Activated CD4-positive, alpha-beta T cell treated with anti-CD3 and anti-CD28 coated beads for 36 hours (primary cell): ENCODE measurements at regions of chr6 and their contacts with region 1.

Region 1: DNA sequence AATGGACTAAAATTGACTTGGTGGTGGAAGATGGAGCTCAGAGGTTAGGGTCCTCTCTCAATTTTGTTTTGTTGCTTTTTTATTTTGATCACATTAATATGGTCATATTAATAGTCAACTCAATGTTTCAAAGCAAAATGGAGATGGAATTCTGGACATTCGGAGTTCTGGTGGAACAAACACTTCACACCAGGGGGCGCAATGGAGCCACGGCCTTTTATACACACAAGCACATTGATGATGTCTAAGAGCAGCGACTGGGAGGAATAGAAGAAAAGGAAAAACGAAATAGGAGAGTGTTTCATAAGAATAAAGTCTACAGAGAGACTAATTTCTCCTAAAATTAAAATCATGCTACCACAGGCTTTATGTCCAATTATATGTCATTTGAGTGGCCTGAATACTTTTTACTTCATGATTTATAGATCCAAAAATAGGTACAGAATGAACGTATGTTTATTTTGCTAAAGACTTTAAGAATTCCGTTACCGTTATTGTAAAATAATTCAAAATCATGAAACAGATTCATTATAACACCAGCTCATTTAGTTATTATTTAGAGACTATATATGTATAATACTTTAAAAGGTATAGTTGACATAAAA is 197.6 kb upstream of the SASH1 start:
- DNase-seq: peak; percentile 85
- ATAC-seq: no peak
- H3K4me3 Mint-ChIP-seq: no peak overlapping the region
- H3K27ac Mint-ChIP-seq: no peak overlapping the region
- H3K4me1 Mint-ChIP-seq: peaks cover 19% of the 10 kb centered on the region
- H3K27me3 Mint-ChIP-seq: peaks cover 9% of the 10 kb centered on the region

Region 2: DNA sequence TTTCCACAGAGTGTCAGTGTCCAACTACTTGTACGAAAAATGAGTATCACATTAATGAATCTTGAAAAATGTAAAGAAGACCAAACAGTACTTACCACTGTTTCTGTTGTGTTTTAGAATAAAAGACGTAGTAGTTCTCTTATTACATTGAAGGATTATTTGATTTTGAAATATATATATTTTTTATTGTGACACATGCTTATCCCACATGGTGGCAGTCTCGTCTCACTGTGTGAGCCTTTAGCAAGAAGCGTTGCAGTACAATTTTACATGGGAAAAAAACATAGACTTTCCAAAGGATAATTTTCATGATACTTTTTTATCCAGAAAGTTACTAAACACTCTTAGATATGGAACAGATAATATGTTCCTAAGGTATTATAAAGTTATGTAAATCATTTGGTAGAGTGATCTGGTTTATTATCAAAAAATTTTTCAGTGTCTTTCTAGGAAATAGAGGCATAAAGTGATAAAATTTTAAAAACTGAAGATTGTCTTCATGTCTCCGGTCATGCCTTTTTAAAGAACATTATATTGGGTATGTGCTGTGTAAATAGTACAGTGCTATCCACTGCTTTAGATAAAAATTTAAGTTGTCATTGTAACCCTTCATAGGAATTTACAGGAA is 754.0 kb before region 1 on chr6:
- CTCF ChIA-PET with region 1: interaction called, 5 read pairs
- POLR2A ChIA-PET with region 1: no interaction called
- intact Hi-C with region 1: loop called in 1 of 2 experiments (anchors 10 kb)
- DNase-seq: no peak
- ATAC-seq: no peak
- H3K4me3 Mint-ChIP-seq: no peak overlapping the region
- H3K27ac Mint-ChIP-seq: no peak overlapping the region
- H3K4me1 Mint-ChIP-seq: no peaks in the 10 kb centered on the region
- H3K27me3 Mint-ChIP-seq: no peaks in the 10 kb centered on the region

Region 3: GRCh38 chr6:148166339-148166968 is 21.4 kb after region 1 on chr6:
- CTCF ChIA-PET with region 1: interaction called, 49 read pairs
- POLR2A ChIA-PET with region 1: no interaction called
- intact Hi-C with region 1: loop called (anchors 1 kb)
- DNase-seq: no peak
- ATAC-seq: peak; percentile 33
- H3K4me3 Mint-ChIP-seq: no peak overlapping the region
- H3K27ac Mint-ChIP-seq: no peak overlapping the region
- H3K4me1 Mint-ChIP-seq: peaks cover 2% of the 10 kb centered on the region
- H3K27me3 Mint-ChIP-seq: peaks cover 5% of the 10 kb centered on the region

Region 4: DNA sequence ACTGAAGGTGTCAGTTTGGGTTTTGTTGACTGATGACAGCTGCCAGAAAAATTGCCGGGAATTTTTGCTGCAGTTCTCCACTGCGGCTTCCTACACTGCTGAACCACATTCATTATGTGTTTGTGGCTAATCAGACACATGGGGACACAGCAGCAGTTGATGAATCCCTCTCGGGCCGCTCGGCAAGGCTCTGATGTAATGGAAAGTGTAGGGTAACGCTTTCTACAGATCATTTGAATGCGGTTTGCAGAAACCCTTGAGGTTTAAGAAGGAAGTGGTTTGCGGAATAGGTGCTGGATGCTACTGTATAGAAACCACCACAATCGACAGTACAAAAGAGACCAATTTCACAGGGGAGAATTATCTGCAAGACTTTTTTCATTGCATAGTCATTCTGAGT is 59.0 kb after region 1 on chr6:
- CTCF ChIA-PET with region 1: no interaction called
- POLR2A ChIA-PET with region 1: no interaction called
- intact Hi-C with region 1: loop called (anchors 1 to 2 kb)
- DNase-seq: peak; percentile 85
- ATAC-seq: peak; percentile 88
- H3K4me3 Mint-ChIP-seq: peak overlapping the region; percentile 66
- H3K27ac Mint-ChIP-seq: peak overlapping the region; percentile 59
- H3K4me1 Mint-ChIP-seq: peaks cover 38% of the 10 kb centered on the region
- H3K27me3 Mint-ChIP-seq: peaks cover 75% of the 10 kb centered on the region

Region 5: DNA sequence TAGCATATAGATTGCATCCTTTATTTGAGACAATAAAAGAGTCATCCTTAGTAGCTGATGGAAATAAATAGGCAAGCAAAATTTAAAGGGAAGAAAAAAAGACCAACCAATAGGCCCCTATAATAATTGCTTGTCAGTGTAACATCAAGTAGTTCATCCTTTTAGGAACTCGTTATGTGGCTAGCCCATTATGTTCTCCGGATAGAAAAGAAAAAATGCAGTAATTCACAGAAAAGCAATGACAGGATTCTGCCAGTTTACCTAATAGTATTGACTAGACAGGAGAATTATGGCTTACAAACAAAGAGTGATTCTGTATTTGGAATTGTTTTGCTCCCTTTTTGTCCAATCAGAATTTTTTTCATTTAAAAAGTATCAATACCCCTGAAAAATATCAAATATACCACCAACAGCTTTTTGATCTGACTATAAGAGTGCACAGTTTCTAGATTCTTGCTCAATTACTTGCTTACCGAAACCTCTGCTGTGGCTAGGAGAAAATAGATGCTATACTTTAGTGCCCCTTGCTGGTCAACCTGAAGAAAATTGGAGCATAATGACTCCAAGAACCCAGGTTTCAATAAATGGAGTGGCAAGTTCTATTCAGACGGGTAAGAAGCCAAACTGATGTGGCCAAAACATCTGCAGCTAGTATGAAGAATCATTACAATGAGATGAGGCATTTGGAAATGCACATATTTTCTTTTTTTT is 106.1 kb after region 1 on chr6:
- CTCF ChIA-PET with region 1: interaction called, 3 read pairs
- POLR2A ChIA-PET with region 1: no interaction called
- intact Hi-C with region 1: loop called in 1 of 2 experiments (anchors 1 kb)
- DNase-seq: no peak
- ATAC-seq: no peak
- H3K4me3 Mint-ChIP-seq: no peak overlapping the region
- H3K27ac Mint-ChIP-seq: no peak overlapping the region
- H3K4me1 Mint-ChIP-seq: no peaks in the 10 kb centered on the region
- H3K27me3 Mint-ChIP-seq: peaks cover 9% of the 10 kb centered on the region

Region 6: DNA sequence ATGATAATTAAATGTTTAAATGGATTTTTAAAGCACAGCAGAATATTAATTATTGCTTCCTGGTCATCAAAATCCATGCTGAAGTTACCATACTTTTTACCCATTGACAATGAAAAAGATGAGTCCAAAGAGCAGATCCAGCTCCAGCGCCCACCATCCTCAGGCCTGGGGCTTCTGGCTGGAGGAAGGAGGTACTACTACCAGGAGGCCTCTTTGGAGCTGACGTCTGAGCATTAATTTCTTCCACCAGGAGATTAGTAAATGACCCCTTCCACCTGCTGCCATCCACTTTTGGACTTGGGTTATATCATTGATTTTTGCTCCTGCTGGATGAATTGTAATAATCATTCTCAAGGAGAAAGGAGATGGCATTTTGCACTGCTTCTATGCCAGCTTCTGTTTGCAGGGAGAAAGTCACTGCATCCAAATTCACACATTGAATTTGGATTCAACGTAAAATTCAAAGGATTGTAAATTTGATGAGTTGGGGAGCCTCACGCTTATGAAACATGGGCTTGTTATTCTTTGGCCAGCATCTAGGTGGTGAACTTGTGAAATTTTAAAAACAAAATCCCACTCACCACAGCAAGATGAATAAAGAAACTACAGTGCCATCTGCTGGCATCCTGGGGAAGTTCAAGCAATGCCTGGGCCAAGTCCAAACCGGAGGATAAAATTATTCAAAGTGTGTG is 319.4 kb after region 1 on chr6:
- CTCF ChIA-PET with region 1: interaction called, 6 read pairs
- POLR2A ChIA-PET with region 1: no interaction called
- intact Hi-C with region 1: loop called (anchors 1 to 10 kb)
- DNase-seq: peak; percentile 75
- ATAC-seq: peak; percentile 60
- H3K4me3 Mint-ChIP-seq: no peak overlapping the region
- H3K27ac Mint-ChIP-seq: no peak overlapping the region
- H3K4me1 Mint-ChIP-seq: peaks cover 3% of the 10 kb centered on the region
- H3K27me3 Mint-ChIP-seq: peaks cover 12% of the 10 kb centered on the region

Region 7: DNA sequence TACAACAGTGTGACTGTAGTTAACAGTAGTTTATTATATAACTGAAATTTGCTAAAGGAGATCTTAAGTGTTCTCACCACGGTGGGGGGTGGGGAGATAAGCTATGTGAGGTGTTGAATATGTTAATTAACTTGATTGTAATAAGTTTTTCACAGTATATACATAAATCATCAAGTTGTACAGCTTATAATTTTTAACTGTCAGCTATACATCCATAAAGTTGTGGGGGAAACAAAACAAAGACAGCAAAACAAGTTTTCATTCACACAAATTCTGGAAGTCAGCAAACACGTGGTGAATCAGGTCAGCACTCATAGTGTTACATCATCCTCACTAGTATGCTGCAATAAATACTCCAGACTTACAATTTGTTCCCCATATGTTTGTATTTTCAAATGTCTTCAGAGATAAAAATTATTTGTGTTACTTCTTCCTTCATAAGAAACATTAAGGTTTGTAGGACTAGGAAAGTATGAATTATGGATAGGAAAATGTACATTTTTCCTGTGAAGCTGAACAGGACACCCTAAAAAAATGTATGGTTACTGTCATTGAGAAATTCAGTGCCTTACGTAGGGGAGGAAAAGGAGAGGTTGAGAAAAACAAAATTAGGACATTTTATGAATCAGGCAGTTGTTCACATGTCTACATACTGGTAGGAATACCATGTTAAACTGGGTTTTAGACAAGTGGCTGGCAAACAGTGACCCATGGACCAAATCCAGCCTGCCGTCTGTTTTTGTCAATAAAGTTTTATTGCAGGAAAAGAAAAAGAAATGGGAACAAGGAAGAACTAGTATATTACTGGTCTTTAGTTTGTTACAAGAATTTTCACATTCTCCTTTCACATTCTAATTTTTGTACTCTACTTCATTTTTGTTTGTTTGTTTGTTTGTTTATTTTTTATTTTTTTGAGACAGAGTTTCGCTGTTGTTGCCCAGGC is 1261.1 kb after region 1 on chr6:
- CTCF ChIA-PET with region 1: no interaction called
- POLR2A ChIA-PET with region 1: no interaction called
- intact Hi-C with region 1: loop called in 1 of 2 experiments (anchors 10 kb)
- DNase-seq: no peak
- ATAC-seq: peak; percentile 27
- H3K4me3 Mint-ChIP-seq: no peak overlapping the region
- H3K27ac Mint-ChIP-seq: peak overlapping the region; percentile 86
- H3K4me1 Mint-ChIP-seq: peaks cover 33% of the 10 kb centered on the region
- H3K27me3 Mint-ChIP-seq: no peaks in the 10 kb centered on the region